HEK293 (cell line): ENCODE measurements at regions of chrX and their contacts with region 1.

Region 1: GRCh38 chrX:147476008-147476407 is 435.7 kb upstream of the FMR1 start:
- H3K4me3 ChIP-seq: no peak overlapping the region
- H3K27ac ChIP-seq: no peak overlapping the region
- H3K4me1 ChIP-seq: no peaks in the 10 kb centered on the region
- CTCF ChIP-seq: no peak

Region 2: DNA sequence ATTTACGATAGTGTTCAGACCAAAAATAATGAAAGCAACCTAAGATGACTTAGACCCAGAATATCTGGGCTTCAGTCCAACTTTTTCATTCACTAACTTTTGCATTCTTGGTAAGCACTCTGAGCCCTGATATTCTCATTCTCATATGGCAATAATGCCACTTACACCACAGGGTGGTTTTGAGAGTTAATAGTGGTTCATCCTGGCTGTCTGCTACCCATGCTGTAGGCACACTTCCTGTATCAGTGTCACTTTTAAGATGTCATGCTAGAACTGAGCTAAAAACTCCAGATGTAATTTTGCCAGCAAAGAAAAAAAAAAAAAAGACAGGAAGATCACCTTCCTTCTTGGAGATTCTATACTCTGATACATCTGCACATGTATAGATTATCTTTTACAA is 72.9 kb before region 1 on chrX:
- CTCF ChIA-PET with region 1: no interaction called
- POLR2A ChIA-PET with region 1: no interaction called
- H3K4me3 ChIP-seq: no peak overlapping the region
- H3K27ac ChIP-seq: no peak overlapping the region
- H3K4me1 ChIP-seq: no peaks in the 10 kb centered on the region
- CTCF ChIP-seq: no peak

Region 3: DNA sequence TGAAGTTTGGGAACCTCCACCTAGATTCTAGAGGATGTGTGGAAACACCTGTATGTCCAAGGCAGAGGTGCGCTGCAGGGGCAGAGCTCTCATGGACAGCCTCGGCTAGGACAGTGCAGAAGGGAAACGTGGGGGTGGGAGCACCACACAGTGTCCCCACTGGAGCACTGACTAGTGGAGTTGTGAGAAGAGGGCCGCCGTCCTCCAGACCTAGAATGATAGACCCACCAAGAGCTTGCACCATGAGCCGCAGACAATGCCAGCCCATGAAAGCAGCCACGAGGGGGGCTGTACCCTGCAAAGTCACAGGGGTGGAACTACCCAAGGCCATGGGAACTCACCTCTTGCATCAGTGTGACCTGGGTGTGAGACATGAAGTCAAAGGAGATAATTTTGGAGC is 161.2 kb after region 1 on chrX:
- CTCF ChIA-PET with region 1: no interaction called
- POLR2A ChIA-PET with region 1: no interaction called
- H3K4me3 ChIP-seq: no peak overlapping the region
- H3K27ac ChIP-seq: no peak overlapping the region
- H3K4me1 ChIP-seq: no peaks in the 10 kb centered on the region
- CTCF ChIP-seq: no peak

Region 4: DNA sequence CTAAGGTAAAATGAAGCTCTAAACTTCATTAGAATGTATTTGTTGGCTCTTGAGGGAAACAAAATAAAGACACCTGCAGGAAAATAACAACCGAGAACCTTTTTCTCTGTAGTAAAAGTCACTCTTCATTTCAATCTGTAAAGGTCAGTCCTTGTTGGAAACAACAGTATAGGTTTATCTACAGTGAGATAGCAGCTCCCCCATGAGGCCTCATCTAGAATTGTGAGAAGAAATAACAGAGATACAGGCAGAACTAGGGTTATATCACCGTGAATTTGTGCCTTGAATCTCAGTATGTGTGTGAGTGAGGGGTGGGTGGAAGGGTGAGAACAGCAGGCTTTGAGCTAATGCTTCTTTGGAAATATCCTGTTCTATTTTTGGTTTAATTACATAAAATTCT is 327.9 kb after region 1 on chrX:
- CTCF ChIA-PET with region 1: interaction called, 25 read pairs
- POLR2A ChIA-PET with region 1: no interaction called
- H3K4me3 ChIP-seq: no peak overlapping the region
- H3K27ac ChIP-seq: no peak overlapping the region
- H3K4me1 ChIP-seq: no peaks in the 10 kb centered on the region
- CTCF ChIP-seq: no peak; the same call in 1 of the 2 replicates